Activated CD4-positive, alpha-beta T cell treated with anti-CD3 and anti-CD28 coated beads, Interleukin-2, amount 10 ng/mL, durations not matched to agents 24 days and 14 days (primary cell): ENCODE measurements at regions of chr17 and their contacts with region 1.

Region 1: DNA sequence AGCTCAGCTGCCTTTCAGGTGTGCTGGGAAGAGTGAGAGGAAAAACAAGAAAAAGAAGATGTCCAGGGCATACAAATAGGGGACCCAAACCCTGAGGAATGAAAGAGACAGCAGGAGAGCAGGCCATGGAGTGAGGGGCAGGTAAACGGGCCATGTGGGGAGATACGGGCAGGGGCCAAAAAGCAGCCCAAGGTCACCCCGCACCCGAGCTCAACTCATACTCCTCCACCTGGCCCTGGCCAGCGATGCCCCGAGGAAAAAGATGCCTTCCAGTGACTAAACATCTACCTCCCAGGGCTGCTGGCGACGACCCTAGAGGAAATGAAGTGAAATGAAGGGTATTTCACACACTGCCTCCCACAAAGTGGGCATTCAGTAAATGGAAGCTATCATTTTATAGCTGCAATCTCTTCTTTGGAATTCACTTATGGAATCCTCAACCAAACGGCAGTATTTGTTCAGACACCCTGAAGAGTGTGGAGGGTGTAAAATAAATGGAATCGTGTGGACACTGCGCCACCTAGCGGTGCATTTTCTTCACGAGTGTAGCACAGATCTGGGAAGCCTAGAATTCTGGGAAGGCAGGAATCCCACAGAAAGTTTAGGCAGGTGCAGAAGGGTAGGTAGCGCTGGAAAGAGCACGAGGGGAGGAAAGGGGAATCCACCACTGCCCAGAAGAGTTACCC is 14.9 kb downstream of the ELAC2 start:
- DNase-seq: peak; percentile 81
- H3K4me3 Mint-ChIP-seq: no peak overlapping the region
- H3K27ac Mint-ChIP-seq: no peak overlapping the region
- H3K4me1 Mint-ChIP-seq: no peaks in the 10 kb centered on the region
- H3K27me3 Mint-ChIP-seq: no peaks in the 10 kb centered on the region

Region 2: DNA sequence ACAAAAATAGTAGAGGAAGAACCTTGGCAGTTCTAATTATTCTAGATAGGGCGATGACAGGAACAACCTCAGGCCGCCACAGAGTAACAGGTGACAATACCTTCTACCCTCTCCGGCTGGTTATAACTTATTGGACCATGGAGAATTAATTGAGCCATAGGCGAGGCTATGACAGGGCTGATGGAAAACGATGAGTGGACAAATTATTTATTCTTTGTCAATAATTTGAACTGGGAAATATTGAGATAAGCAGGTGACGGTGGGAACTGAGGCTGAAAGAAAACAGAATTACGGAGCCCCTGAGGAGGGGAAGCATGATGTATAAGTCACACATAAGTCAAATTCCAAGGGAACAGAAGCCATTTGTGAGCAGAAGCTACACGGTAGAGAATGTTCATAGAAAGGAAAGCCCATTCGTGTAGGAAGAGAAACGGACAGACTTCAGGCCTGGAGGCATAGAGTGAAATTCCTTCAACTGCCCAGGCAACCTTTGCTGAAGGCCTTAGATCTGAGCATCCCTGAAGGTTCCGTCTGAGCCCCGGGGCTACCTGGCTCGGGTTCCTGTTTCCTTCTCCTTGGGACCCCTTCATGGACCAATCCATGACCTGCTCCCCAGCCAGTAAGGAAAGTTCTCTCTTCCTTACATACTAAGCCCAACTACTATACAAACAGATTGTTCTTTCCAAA is 824.1 kb before region 1 on chr17:
- intact Hi-C with region 1: loop called (anchors 10 kb)
- DNase-seq: no peak
- H3K4me3 Mint-ChIP-seq: no peak overlapping the region
- H3K27ac Mint-ChIP-seq: no peak overlapping the region
- H3K4me1 Mint-ChIP-seq: no peaks in the 10 kb centered on the region
- H3K27me3 Mint-ChIP-seq: no peaks in the 10 kb centered on the region

Region 3: GRCh38 chr17:12256380-12256995 is 746.4 kb before region 1 on chr17:
- intact Hi-C with region 1: loop called (anchors 10 kb)
- DNase-seq: no peak
- H3K4me3 Mint-ChIP-seq: no peak overlapping the region
- H3K27ac Mint-ChIP-seq: no peak overlapping the region
- H3K4me1 Mint-ChIP-seq: no peaks in the 10 kb centered on the region
- H3K27me3 Mint-ChIP-seq: no peaks in the 10 kb centered on the region

Region 4: GRCh38 chr17:12800855-12801365 is 202.0 kb before region 1 on chr17:
- intact Hi-C with region 1: no loop called
- DNase-seq: no peak
- H3K4me3 Mint-ChIP-seq: no peak overlapping the region
- H3K27ac Mint-ChIP-seq: no peak overlapping the region
- H3K4me1 Mint-ChIP-seq: no peaks in the 10 kb centered on the region
- H3K27me3 Mint-ChIP-seq: no peaks in the 10 kb centered on the region